Sciatic nerve (tissue), 2 donors: ENCODE measurements at regions of chr2 and their contacts with region 1.

Region 1: DNA sequence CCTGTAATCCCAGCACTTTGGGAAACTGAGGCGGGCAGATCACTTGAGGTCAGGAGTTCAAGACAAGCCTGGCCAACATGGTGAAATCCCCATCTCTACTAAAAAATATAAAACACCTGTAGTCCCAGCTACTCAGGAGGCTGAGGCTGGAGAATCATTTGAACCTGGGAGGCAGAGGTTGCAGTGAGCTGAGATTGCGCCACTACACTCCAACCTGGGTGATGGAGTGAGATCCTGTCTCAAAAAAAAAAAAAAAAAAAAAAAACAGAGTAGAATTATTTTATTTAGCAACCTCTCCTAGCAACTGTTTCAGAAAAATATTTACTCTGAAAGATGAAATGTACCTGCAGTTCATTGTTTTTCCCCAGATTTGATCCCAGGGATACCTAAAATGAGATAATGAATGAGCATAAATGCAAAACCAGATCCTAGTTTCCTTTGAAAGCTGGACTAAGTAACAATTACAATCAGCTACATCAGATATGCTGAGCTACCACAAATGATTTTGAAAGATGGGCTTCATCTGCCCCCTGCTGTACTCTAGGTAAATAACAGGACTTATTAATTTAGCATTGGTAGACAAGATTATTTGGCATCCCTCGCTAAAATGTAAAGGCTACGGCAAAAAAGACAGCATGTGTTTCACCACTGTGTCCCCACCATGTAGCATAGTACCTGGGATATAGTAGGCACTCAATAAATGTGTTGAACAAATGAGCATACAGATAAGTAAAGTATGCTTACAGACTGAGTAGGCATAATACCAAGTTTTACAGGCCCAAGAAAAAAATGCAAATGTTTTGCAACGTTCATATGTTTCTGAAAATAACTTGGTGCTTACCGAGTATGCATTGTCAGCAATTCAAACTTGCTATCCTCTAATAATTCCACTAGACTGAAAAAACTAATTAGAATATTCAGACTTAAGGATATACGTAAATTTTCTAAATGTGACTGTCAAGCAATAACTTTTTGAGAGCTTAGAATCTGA is 102.5 kb downstream of the ATL2 start:
- DNase-seq: no peak
- ATAC-seq: peak; percentile 93

Region 2: DNA sequence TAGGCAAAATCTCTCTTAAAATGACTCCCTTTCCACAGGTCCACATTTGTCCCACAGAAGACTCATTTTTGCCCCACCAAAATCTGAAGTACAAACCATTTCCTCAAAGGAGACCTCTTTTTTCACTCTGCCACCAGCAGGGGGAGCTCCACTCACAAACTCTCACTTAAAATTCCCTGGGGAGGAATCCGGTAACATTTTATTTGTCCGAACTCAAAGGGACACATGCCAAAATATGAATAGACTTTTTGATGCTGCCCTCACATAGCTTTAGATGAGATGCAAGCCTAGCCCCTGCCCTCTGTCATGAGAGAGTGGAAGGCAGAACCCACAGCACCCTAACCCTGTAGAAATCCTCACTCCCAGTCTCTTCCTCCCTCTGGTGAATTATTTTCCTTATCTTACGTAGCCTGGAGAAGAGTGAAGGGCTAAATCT is 292.4 kb before region 1 on chr2:
- intact Hi-C with region 1: loop called (anchors 10 kb)
- DNase-seq: peak; percentile 86
- ATAC-seq: peak; percentile 79

Region 3: DNA sequence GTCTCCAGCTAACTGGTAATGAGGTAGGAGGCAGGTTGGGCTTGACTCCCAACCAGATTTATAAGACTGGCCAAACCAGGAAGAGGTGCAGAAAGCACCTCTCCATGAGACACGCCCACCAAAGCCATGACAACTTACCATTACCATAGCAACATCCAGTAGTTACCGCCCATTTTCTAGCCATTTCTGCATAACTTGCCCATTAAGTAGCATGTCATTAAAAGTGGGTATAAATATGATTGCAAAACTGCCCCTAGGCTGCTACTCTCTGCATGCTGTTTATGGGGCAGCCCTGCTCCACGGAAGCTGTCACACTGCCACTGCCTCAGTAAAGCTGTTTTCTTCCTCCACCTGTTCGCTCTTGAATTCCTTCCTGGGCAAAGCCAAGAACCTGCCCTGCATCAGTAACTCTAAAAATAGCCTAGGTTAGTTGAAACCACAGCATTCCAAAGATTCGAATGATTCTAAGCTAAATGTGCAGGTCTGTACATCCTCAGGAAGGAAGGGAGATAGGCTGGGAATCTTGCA is 29.4 kb before region 1 on chr2:
- intact Hi-C with region 1: no loop called
- DNase-seq: no peak
- ATAC-seq: no peak